ENCODE measurements at regions of chr2 and their contacts with region 1.

Region 1: GRCh38 chr2:37537316-37537715 is 134.1 kb downstream of the CDC42EP3 start:
- DNase-seq: no peak
- ATAC-seq: no peak
- H3K4me3 ChIP-seq: no peak overlapping the region
- H3K4me3 Mint-ChIP-seq: no peak overlapping the region
- H3K27ac ChIP-seq: no peak overlapping the region
- H3K27ac Mint-ChIP-seq: no peak overlapping the region
- H3K4me1 ChIP-seq: no peaks in the 10 kb centered on the region
- H3K4me1 Mint-ChIP-seq: peaks cover 0 to 5% (median 3%) of the 10 kb centered on the region in 7 donors
- H3K27me3 ChIP-seq: no peaks in the 10 kb centered on the region
- H3K27me3 Mint-ChIP-seq: peaks cover 0 to 28% (median 0%) of the 10 kb centered on the region in 5 donors

Region 2: GRCh38 chr2:37459095-37459981 is 78.0 kb before region 1 on chr2:
- CTCF ChIA-PET with region 1: no interaction called
- POLR2A ChIA-PET with region 1: no interaction called
- intact Hi-C with region 1: loop called in 1 of 2 experiments (anchors 2 kb)
- DNase-seq: no peak
- ATAC-seq: no peak
- H3K4me3 ChIP-seq: no peak overlapping the region
- H3K4me3 Mint-ChIP-seq: peak overlapping the region in 1 of 10 donors; percentile 3
- H3K27ac ChIP-seq: no peak overlapping the region
- H3K27ac Mint-ChIP-seq: peak overlapping the region in 3 of 9 donors; percentile 20 to 38 (median 32)
- H3K4me1 ChIP-seq: peaks cover 27 to 45% of the 10 kb centered on the region in 2 donors
- H3K4me1 Mint-ChIP-seq: peaks cover 9 to 64% (median 47%) of the 10 kb centered on the region in 7 donors
- H3K27me3 ChIP-seq: no peaks in the 10 kb centered on the region
- H3K27me3 Mint-ChIP-seq: peaks cover 0 to 12% (median 0%) of the 10 kb centered on the region in 5 donors

Measured in naive thymus-derived CD4-positive, alpha-beta T cell (primary cell).